Activated CD4-positive, alpha-beta T cell treated with anti-CD3 and anti-CD28 coated beads for 36 hours (primary cell): ENCODE measurements at regions of chr11 and their contacts with region 1.

Region 1: GRCh38 chr11:119067371-119068222 is at the start of gene VPS11:
- DNase-seq: peak; percentile 100
- ATAC-seq: peak; percentile 98
- H3K4me3 Mint-ChIP-seq: peak within 1 kb of the TSS; percentile 87
- H3K27ac Mint-ChIP-seq: peak within 1 kb of the TSS; percentile 98
- H3K4me1 Mint-ChIP-seq: peaks cover 34% of the 10 kb centered on the region
- H3K27me3 Mint-ChIP-seq: no peaks in the 10 kb centered on the region
- total RNA-seq, gene VPS11: 20.5 to 25.4 TPM

Region 2: DNA sequence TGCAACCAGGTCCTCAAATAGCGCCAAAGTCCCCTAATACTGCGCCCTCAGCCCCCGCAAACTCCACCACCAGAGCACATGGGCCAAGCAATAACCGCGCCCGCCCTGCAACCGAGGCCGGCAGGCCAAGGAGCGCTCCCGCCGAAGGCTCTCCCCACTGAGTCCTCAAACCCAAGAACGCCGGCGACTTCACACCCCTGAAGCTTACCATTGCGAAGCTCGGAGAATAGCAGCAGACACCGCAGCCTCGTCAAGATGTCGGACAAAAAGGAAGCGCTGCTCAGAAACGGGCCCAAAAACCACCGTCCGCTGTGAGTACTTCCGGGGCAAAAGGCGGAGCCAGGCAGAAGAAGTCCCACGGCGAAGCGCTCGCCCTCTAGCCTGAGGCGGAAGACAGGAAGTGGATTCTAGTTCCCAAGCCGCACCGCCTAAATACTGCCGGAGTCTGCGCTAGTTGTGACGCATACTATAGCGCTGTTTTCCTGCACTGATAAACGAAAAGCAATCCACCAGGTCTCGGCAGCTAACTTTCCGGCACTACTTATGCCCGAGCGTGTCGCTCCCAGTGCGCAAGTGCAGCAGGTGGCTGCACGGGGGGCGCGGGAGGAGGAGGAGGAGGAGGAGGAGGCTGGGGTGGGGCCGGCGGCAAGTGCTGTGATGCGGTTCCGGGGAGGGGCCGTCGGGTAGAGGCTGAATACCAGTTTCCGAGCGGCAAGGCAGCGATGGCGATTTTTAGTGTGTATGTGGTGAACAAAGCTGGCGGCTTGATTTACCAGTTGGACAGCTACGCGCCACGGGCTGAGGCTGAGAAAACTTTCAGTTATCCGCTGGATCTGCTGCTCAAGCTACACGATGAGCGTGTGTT is 49.3 kb before region 1 on chr11 and contains the starts of genes RPS25 and TRAPPC4:
- CTCF ChIA-PET with region 1: no interaction called
- POLR2A ChIA-PET with region 1: interaction called, 3 read pairs
- intact Hi-C with region 1: loop called (anchors 1 to 2 kb)
- DNase-seq: peak; percentile 98
- ATAC-seq: peak; percentile 92
- H3K4me3 Mint-ChIP-seq: peak within 1 kb of the TSS; percentile 99
- H3K27ac Mint-ChIP-seq: peak within 1 kb of the TSS; percentile 99
- H3K4me1 Mint-ChIP-seq: peaks cover 53% of the 10 kb centered on the region
- H3K27me3 Mint-ChIP-seq: no peaks in the 10 kb centered on the region
- total RNA-seq, gene RPS25: 1,590 to 1,820 TPM
- total RNA-seq, gene TRAPPC4: 62.2 to 81.9 TPM

Region 3: DNA sequence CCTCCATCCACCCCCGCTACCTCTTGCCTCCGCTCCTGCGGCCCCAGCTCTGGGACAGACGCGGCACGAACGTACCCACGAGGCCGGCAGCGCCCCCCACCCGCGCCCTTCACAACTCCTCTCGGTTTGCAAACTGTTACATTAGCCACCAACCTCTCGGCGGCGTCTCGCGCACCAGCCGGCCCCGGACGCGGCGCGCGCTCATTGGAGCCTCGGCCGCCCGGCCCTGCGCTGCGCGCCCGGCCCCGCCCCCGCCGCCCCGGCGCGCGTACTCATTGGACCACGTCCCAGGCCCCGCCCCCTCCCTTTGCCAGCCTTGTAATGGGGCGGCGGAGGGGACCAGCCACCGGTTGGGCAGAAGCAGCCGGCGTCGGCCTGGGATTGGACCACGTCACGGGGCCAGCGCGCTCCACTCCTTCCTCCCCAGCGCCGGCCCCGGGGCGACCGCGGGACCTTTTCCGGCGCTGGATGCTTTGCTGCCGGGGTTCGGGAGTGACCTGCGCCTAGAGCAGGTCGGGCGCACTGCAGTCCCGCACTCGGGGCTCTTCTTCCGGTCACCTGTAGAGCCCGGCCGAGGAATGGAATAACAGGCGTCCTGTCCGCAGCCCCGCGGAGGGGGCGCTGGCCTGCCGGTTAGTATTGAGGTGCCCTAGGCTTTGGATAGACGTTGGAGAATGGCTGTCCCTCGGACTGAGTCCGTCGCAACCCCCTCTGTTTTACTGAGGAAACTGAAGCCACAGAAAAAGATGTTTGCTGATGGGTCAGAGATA is 10.4 kb before region 1 on chr11 and contains the start of gene HYOU1:
- CTCF ChIA-PET with region 1: interaction called, 16 read pairs
- POLR2A ChIA-PET with region 1: interaction called, 22 read pairs
- intact Hi-C with region 1: loop called (anchors 1 kb)
- DNase-seq: peak; percentile 100
- ATAC-seq: peak; percentile 96
- H3K4me3 Mint-ChIP-seq: peak within 1 kb of the TSS; percentile 82
- H3K27ac Mint-ChIP-seq: peak within 1 kb of the TSS; percentile 94
- H3K4me1 Mint-ChIP-seq: peaks cover 34% of the 10 kb centered on the region
- H3K27me3 Mint-ChIP-seq: no peaks in the 10 kb centered on the region
- total RNA-seq, gene HYOU1: 104 to 114 TPM

Region 4: DNA sequence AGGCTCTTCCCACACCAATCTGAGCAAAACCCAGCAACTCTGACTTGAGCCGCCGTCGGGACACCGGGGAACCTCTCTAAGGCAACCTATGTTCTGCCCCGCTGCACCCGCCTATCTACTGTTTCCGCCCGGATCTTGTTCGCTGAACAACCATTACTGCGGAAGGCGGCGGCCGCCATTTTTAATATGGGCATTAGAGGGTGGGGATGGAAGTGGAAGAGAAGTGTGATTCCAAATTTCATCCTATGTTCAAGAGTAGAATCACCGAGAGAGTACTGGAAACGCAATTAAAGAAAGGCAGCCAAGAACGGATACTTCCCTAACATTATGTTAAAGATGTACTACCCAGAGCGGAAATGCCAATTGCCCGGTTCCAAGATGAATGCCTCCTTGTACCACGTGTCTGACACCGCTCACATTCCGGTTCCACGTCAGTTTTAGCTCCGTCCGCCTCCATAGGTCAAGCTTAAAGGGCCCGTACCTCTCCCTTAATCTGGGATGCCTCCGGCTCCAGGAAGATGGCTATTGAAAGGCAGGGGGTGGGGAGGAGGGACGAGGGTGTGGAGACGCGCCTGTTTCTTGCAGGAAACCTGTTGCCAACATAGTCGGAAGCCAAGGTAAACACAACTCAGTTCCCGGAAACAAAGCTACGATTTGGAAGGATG is 34.3 kb after region 1 on chr11 and contains the start of gene DPAGT1:
- CTCF ChIA-PET with region 1: interaction called, 20 read pairs
- POLR2A ChIA-PET with region 1: interaction called, 12 read pairs
- intact Hi-C with region 1: loop called in 1 of 2 experiments (anchors 1 kb)
- DNase-seq: peak; percentile 93
- ATAC-seq: peak; percentile 86
- H3K4me3 Mint-ChIP-seq: peak within 1 kb of the TSS; percentile 95
- H3K27ac Mint-ChIP-seq: peak within 1 kb of the TSS; percentile 100
- H3K4me1 Mint-ChIP-seq: peaks cover 42% of the 10 kb centered on the region
- H3K27me3 Mint-ChIP-seq: no peaks in the 10 kb centered on the region
- total RNA-seq, gene DPAGT1: 57.8 to 73.5 TPM

Region 5: GRCh38 chr11:119196833-119197483 is 129.4 kb after region 1 on chr11:
- CTCF ChIA-PET with region 1: interaction called, 4 read pairs
- POLR2A ChIA-PET with region 1: no interaction called
- intact Hi-C with region 1: loop called (anchors 1 to 2 kb)
- DNase-seq: peak; percentile 80
- ATAC-seq: peak; percentile 97
- H3K4me3 Mint-ChIP-seq: no peak overlapping the region
- H3K27ac Mint-ChIP-seq: no peak overlapping the region
- H3K4me1 Mint-ChIP-seq: peaks cover 2% of the 10 kb centered on the region
- H3K27me3 Mint-ChIP-seq: no peaks in the 10 kb centered on the region